Endothelial cell of umbilical vein (primary cell): ENCODE measurements at regions of chr2 and their contacts with region 1.

Region 1: GRCh38 chr2:219498280-219499057 is at the start of gene GMPPA:
- DNase-seq: peak; percentile 99
- H3K4me3 ChIP-seq: peak within 1 kb of the TSS; percentile 72 to 87 (median 76)
- H3K27ac ChIP-seq: peak within 1 kb of the TSS; percentile 66
- H3K4me1 ChIP-seq: peaks cover 12% of the 10 kb centered on the region
- H3K27me3 ChIP-seq: peaks cover 31 to 36% of the 10 kb centered on the region in 2 experiments
- CTCF ChIP-seq: peak in 1 of 2 donors; percentile 10
- POLR2A ChIP-seq: peak; percentile 87
- total RNA-seq, gene GMPPA: 34.1 and 39.1 TPM in 2 replicates

Region 2: GRCh38 chr2:219041252-219041651 is 457.2 kb before region 1 on chr2 and contains the start of gene CFAP65:
- CTCF ChIA-PET with region 1: no interaction called
- POLR2A ChIA-PET with region 1: no interaction called
- dilution Hi-C with region 1: no loop called
- intact Hi-C with region 1: no loop called
- DNase-seq: peak; percentile 40
- H3K4me3 ChIP-seq: peak within 1 kb of the TSS in 1 of 3 experiments; percentile 21
- H3K27ac ChIP-seq: no peak within 1 kb of the TSS
- H3K4me1 ChIP-seq: no peaks in the 10 kb centered on the region
- H3K27me3 ChIP-seq: peaks cover 18 to 22% of the 10 kb centered on the region in 2 experiments
- CTCF ChIP-seq: no peak
- POLR2A ChIP-seq: no peak
- total RNA-seq, gene CFAP65: not detected in 2 replicates

Region 3: DNA sequence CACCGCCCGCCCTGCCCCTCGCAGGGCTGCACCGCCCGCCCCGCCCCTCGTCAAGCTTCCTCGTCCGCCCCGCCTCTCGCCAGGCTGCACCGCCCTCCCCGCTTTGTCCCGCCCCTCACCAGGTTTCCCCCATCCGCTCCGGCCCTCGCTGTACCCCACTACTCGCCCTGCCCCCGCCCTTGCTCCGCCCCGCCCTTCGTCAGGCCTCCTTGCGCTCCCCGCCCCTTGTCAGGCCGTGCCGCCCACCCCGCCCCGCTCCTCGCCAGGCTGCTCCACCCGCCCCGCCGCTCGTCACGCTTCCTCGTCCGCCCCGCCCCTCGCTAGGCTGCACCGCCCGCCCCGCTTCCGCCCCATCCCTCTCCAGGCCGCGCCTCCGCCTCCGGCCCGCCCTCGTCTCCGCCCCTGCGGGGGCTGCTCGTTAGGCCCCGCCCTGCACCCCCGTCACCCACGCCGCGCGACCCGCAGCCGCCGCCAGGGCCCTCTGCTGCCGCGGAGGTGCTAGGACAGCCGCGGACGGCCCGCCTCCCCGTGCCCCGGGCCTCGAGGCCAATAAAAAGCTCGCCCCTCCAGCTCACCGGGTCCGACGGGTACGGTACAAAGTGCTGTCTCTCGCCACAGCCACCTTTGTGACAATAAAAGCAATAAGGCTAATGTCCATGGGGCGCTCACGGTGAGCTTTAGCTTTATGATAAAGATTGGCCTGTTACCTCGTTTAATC is 110.2 kb before region 1 on chr2:
- CTCF ChIA-PET with region 1: interaction called, 14 read pairs
- POLR2A ChIA-PET with region 1: interaction called, 3 read pairs
- dilution Hi-C with region 1: no loop called
- intact Hi-C with region 1: loop called (anchors 1 kb)
- DNase-seq: peak; percentile 96
- H3K4me3 ChIP-seq: peak overlapping the region in 2 of 3 experiments; percentile 46 to 55
- H3K27ac ChIP-seq: no peak overlapping the region
- H3K4me1 ChIP-seq: peaks cover 9% of the 10 kb centered on the region
- H3K27me3 ChIP-seq: peaks cover 2% of the 10 kb centered on the region in 2 experiments
- CTCF ChIP-seq: peak; percentile 47 to 56
- POLR2A ChIP-seq: no peak

Region 4: GRCh38 chr2:219459460-219460311 is 38.8 kb before region 1 on chr2:
- CTCF ChIA-PET with region 1: interaction called, 11 read pairs
- POLR2A ChIA-PET with region 1: interaction called, 8 read pairs
- dilution Hi-C with region 1: no loop called
- intact Hi-C with region 1: no loop called
- DNase-seq: peak; percentile 38
- H3K4me3 ChIP-seq: no peak overlapping the region
- H3K27ac ChIP-seq: no peak overlapping the region
- H3K4me1 ChIP-seq: no peaks in the 10 kb centered on the region
- H3K27me3 ChIP-seq: no peaks in the 10 kb centered on the region
- CTCF ChIP-seq: peak; percentile 79 to 95
- POLR2A ChIP-seq: no peak

Region 5: GRCh38 chr2:219484343-219485200 is 13.9 kb before region 1 on chr2:
- CTCF ChIA-PET with region 1: interaction called, 56 read pairs
- POLR2A ChIA-PET with region 1: no interaction called
- dilution Hi-C with region 1: no loop called
- intact Hi-C with region 1: no loop called
- DNase-seq: no peak
- H3K4me3 ChIP-seq: no peak overlapping the region
- H3K27ac ChIP-seq: no peak overlapping the region
- H3K4me1 ChIP-seq: no peaks in the 10 kb centered on the region
- H3K27me3 ChIP-seq: peaks cover 44 to 47% of the 10 kb centered on the region in 2 experiments
- CTCF ChIP-seq: no peak
- POLR2A ChIP-seq: no peak

Region 6: GRCh38 chr2:219521066-219521880 is 22.8 kb after region 1 on chr2:
- CTCF ChIA-PET with region 1: interaction called, 731 read pairs
- POLR2A ChIA-PET with region 1: interaction called, 4 read pairs
- dilution Hi-C with region 1: no loop called
- intact Hi-C with region 1: no loop called
- DNase-seq: no peak
- H3K4me3 ChIP-seq: no peak overlapping the region
- H3K27ac ChIP-seq: no peak overlapping the region
- H3K4me1 ChIP-seq: no peaks in the 10 kb centered on the region
- H3K27me3 ChIP-seq: peaks cover 53 to 66% of the 10 kb centered on the region in 2 experiments
- CTCF ChIP-seq: peak; percentile 26 to 63
- POLR2A ChIP-seq: no peak

Region 7: GRCh38 chr2:219543601-219544358 is 45.3 kb after region 1 on chr2 and contains the starts of genes CHPF and TMEM198:
- CTCF ChIA-PET with region 1: interaction called, 21 read pairs
- POLR2A ChIA-PET with region 1: no interaction called
- dilution Hi-C with region 1: no loop called
- intact Hi-C with region 1: loop called (anchors 1 kb)
- DNase-seq: peak; percentile 86
- H3K4me3 ChIP-seq: peak within 1 kb of the TSS; percentile 29 to 37 (median 29)
- H3K27ac ChIP-seq: no peak within 1 kb of the TSS
- H3K4me1 ChIP-seq: peaks cover 7% of the 10 kb centered on the region
- H3K27me3 ChIP-seq: peaks cover 18 to 23% of the 10 kb centered on the region in 2 experiments
- CTCF ChIP-seq: no peak
- POLR2A ChIP-seq: no peak
- total RNA-seq, gene CHPF: 0.24 and 0.30 TPM in 2 replicates
- total RNA-seq, gene TMEM198: not detected in 2 replicates

Region 8: DNA sequence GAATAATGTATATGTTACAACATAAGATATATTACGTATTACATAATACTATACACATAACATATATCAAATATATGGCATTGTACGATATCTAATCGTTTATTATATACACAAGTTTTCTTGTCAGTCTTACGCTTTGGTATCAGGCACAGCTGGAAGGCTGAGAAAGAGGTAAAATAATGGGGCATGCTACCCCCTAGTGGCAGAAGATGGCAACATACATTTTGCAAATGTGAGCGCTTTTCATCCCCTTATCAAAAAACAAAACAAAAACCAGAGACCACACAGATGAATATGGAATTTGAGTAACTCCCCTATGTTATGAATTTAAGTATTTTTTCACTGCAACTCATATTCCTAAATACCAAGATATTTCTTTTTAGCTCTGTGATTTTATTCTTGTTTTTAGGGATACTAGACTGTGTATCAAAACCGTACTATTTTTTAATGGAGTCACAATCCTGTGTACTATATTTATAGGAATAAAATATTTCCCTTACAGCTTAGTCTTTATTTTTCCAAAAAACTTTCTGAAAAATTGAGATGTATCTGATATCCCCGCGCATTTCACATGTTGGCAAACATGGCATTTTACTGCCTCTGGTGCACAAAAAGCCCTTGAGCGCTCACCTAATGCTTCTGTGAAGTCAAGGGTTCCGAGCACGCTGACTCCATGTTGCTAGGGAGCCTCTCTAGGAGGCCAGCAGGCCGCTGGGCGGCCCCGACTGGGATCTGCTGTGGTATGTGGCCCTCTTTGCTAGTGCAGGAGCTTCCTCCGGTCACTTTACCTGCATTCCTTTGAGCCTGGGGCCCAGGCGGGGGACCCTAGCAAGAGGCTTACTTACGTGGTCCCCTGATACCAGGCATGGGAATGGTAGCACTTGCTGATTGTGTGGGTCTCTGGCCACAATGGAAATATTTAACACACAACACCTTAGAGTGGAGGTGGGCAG is 191.5 kb after region 1 on chr2:
- CTCF ChIA-PET with region 1: interaction called, 11 read pairs
- POLR2A ChIA-PET with region 1: no interaction called
- dilution Hi-C with region 1: no loop called
- intact Hi-C with region 1: no loop called
- DNase-seq: peak; percentile 62
- H3K4me3 ChIP-seq: no peak overlapping the region
- H3K27ac ChIP-seq: no peak overlapping the region
- H3K4me1 ChIP-seq: no peaks in the 10 kb centered on the region
- H3K27me3 ChIP-seq: peaks cover 0 to 2% of the 10 kb centered on the region in 2 experiments
- CTCF ChIP-seq: peak; percentile 43 to 68
- POLR2A ChIP-seq: no peak

Region 9: DNA sequence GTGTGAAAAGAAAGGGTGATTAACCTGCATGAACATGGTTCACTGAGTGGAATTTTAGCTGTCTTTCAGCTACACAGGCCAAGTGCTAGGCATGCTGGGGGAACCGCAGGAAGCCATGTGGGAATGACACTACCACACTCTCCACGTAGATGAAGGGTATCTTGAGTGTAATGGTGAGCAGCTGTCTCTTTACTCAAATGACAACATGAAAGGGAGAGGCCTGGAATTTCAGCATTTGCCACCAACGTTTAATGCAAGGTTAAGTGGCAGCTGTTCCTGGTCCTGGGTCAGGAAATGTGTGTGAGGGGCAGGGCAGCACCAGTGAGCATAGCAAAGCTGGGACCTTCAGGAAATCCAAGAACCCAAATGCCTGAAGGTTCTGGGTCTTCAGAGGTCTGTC is 717.3 kb after region 1 on chr2:
- CTCF ChIA-PET with region 1: no interaction called
- POLR2A ChIA-PET with region 1: no interaction called
- dilution Hi-C with region 1: no loop called
- intact Hi-C with region 1: no loop called
- DNase-seq: no peak
- H3K4me3 ChIP-seq: no peak overlapping the region
- H3K27ac ChIP-seq: no peak overlapping the region
- H3K4me1 ChIP-seq: no peaks in the 10 kb centered on the region
- H3K27me3 ChIP-seq: no peaks in the 10 kb centered on the region
- CTCF ChIP-seq: no peak
- POLR2A ChIP-seq: no peak